Common myeloid progenitor, CD34-positive (primary cell): ENCODE measurements at regions of chr2 and their contacts with region 1.

Region 1: GRCh38 chr2:215793747-215794595 is 219.4 kb downstream of the MREG start:
- DNase-seq: peak; percentile 95 to 98 (median 98)
- H3K4me3 ChIP-seq: peak overlapping the region in 3 of 7 experiments; percentile 31 to 53 (median 35)
- H3K27ac ChIP-seq: peak overlapping the region in 1 of 2 experiments; percentile 70
- H3K4me1 ChIP-seq: peaks cover 27 to 52% (median 38%) of the 10 kb centered on the region in 4 experiments
- H3K27me3 ChIP-seq: no peaks in the 10 kb centered on the region

Region 2: DNA sequence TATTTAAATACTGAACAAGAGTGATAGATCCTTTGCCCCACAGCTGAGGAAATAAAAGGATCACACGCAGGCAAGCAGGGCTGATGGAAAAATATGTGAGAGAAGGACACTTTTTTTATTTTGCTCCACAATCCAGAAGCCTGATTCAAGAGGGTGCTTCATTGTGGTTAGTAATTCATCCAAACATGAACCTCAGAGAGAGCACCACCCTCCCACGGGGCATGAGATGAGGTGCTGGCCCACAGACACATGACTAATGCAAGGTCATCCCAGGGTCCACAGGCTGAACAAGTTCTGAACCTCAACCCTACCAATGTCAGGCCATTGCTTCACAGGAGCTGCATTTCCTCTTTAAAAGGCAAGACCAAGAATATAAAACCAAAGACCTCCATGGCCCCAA is 20.2 kb before region 1 on chr2:
- CTCF ChIA-PET with region 1: no interaction called
- POLR2A ChIA-PET with region 1: no interaction called
- DNase-seq: no peak
- H3K4me3 ChIP-seq: no peak overlapping the region
- H3K27ac ChIP-seq: no peak overlapping the region
- H3K4me1 ChIP-seq: peaks cover 0 to 16% (median 3%) of the 10 kb centered on the region in 4 experiments
- H3K27me3 ChIP-seq: peaks cover 0 to 2% (median 0%) of the 10 kb centered on the region in 5 experiments

Region 3: GRCh38 chr2:215811409-215812345 is 17.7 kb after region 1 on chr2:
- CTCF ChIA-PET with region 1: interaction called, 14 read pairs
- POLR2A ChIA-PET with region 1: no interaction called
- DNase-seq: peak; percentile 64 to 90 (median 88)
- H3K4me3 ChIP-seq: peak overlapping the region in 1 of 7 experiments; percentile 14
- H3K27ac ChIP-seq: peak overlapping the region in 1 of 2 experiments; percentile 19
- H3K4me1 ChIP-seq: peaks cover 13 to 28% (median 17%) of the 10 kb centered on the region in 4 experiments
- H3K27me3 ChIP-seq: peaks cover 0 to 2% (median 0%) of the 10 kb centered on the region in 5 experiments

Region 4: DNA sequence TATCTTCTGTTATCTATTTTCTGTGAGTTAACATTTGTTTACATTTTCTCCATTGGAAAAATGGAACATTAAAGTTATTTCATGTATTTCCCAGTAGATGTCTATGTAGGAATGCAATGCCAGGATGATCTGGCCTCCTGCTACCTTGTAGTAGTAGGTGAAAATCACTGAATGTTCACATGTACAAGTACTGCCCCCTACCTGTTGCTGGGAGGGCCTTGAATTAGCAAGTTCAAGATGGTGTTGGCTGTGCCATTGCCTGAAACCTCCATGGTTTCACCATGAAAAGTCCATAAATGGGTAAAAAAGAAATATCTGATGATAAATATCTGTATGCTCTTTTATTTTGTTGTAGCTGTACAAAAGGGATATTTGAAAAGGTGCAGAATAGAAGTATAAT is 345.9 kb after region 1 on chr2:
- CTCF ChIA-PET with region 1: no interaction called
- POLR2A ChIA-PET with region 1: no interaction called
- DNase-seq: peak; percentile 39 to 55 (median 50)
- H3K4me3 ChIP-seq: no peak overlapping the region
- H3K27ac ChIP-seq: no peak overlapping the region
- H3K4me1 ChIP-seq: no peaks in the 10 kb centered on the region
- H3K27me3 ChIP-seq: no peaks in the 10 kb centered on the region